ENCODE measurements at regions of chr6 and their contacts with region 1.

Region 1: DNA sequence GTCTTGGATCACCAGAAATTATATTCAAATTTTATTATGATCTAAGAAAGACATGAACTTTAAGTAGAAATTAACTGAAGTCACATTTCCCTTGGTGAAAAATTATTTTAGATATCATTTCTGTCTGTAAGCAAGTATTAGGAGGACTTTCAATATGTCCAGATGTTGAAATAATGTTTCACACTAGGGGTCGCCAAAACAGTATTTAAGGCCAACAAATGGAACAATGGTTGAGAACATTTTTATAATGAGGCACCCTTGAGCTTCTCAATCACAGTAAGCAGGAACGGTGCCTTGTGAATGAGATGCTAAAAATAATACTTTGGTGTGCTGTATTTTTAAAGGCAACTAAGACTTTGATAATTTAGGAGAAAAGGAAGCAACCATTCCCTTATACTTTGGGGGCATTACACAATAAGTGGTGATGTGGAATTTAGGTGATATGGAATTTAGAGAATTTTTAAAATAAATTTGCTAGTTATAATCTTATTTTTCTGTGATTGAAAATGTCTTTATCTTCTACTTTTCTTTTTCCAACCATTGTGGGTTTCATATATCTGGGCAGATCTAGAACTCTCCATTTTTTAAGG is 9.6 kb upstream of the SF3B5 start:
- DNase-seq: peak; percentile 59
- ATAC-seq: peak; percentile 92
- H3K4me3 ChIP-seq: no peak overlapping the region
- H3K27ac ChIP-seq: no peak overlapping the region
- H3K4me1 ChIP-seq: no peaks in the 10 kb centered on the region
- H3K27me3 ChIP-seq: no peaks in the 10 kb centered on the region
- CTCF ChIP-seq: peak; percentile 55 to 88 (median 79)
- POLR2A ChIP-seq: no peak
- RAD21 ChIP-seq: peak; percentile 95

Region 2: DNA sequence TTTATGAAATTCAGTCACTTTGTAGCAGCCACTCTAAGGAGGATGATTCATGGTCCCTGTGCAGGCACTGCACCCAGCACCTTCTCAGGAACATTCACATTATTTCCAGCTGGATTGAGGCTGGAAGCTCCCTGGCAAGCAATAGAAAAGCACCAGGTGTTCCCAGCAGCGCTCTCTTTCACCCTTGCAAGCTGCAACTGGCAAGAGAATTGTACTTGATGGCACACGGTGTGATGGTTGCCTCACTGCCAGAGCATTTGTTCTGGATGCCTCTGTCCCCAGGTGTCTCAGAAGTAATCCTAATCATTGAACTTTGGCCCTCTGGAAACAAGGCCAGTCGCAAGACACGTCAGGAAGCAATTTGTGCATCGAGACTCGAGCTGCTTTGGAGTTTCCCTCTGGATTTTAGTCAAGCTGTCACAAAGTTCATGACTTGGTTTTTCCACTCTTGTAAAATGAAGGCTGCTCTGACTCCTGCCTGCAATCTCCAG is 452.1 kb before region 1 on chr6:
- CTCF ChIA-PET with region 1: no interaction called
- POLR2A ChIA-PET with region 1: no interaction called
- RAD21 ChIA-PET with region 1: no interaction called
- intact Hi-C with region 1: no loop called
- DNase-seq: no peak
- ATAC-seq: no peak
- H3K4me3 ChIP-seq: no peak overlapping the region
- H3K27ac ChIP-seq: no peak overlapping the region
- H3K4me1 ChIP-seq: no peaks in the 10 kb centered on the region
- H3K27me3 ChIP-seq: no peaks in the 10 kb centered on the region
- CTCF ChIP-seq: no peak
- POLR2A ChIP-seq: no peak
- RAD21 ChIP-seq: no peak

Region 3: DNA sequence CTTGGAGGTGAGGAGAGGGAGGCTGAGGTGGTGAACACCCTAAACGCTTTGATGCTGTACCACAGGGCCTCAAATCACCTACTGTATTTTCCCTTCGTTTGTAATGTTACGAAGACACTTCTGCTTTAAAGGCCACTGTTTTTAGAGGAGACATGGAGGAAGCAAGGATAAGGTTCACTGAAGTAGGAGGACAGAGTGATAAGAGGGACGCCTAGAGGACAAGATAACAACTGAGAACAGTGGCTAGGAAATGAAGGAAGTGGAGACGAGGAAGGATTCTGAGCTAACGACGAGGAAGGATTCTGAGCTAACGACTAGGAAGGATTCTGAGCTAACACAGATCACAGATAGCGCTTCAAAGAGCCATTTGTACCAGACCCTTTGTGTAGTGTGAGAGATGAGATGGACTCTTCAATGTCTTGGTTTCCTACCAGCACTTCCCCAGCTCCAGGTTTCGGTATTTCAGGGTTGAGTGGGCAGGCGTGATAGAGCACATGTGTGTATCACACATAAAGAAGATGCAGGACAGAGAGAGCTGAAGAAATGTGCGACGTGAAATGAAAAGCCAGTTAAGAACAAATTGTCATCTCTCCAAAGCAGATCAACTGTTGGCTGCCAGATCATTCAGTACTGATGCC is 17.1 kb before region 1 on chr6:
- CTCF ChIA-PET with region 1: no interaction called
- POLR2A ChIA-PET with region 1: no interaction called
- RAD21 ChIA-PET with region 1: no interaction called
- intact Hi-C with region 1: no loop called
- DNase-seq: no peak
- ATAC-seq: no peak
- H3K4me3 ChIP-seq: no peak overlapping the region
- H3K27ac ChIP-seq: no peak overlapping the region
- H3K4me1 ChIP-seq: no peaks in the 10 kb centered on the region
- H3K27me3 ChIP-seq: no peaks in the 10 kb centered on the region
- CTCF ChIP-seq: no peak
- POLR2A ChIP-seq: no peak
- RAD21 ChIP-seq: no peak

Region 4: GRCh38 chr6:144215932-144216667 is 111.1 kb after region 1 on chr6:
- CTCF ChIA-PET with region 1: interaction called, 7 read pairs
- POLR2A ChIA-PET with region 1: no interaction called
- RAD21 ChIA-PET with region 1: no interaction called
- intact Hi-C with region 1: loop called (anchors 2 kb)
- DNase-seq: peak; percentile 91
- ATAC-seq: peak; percentile 87
- H3K4me3 ChIP-seq: peak overlapping the region; percentile 45 to 58
- H3K27ac ChIP-seq: peak overlapping the region; percentile 61
- H3K4me1 ChIP-seq: peaks cover 7 to 22% of the 10 kb centered on the region in 2 experiments; a peak in 3 of 4 replicates
- H3K27me3 ChIP-seq: no peaks in the 10 kb centered on the region
- CTCF ChIP-seq: peak; percentile 59 to 64 (median 63); a peak in 5 of 6 replicates
- POLR2A ChIP-seq: no peak
- RAD21 ChIP-seq: peak; percentile 69

Region 5: GRCh38 chr6:144482142-144482541 is 377.1 kb after region 1 on chr6:
- CTCF ChIA-PET with region 1: interaction called, 21 read pairs
- POLR2A ChIA-PET with region 1: no interaction called
- RAD21 ChIA-PET with region 1: interaction called in 1 of 2 experiments, 5 read pairs
- intact Hi-C with region 1: loop called (anchors 1 kb)
- DNase-seq: peak; percentile 60
- ATAC-seq: peak; percentile 87
- H3K4me3 ChIP-seq: no peak overlapping the region
- H3K27ac ChIP-seq: no peak overlapping the region
- H3K4me1 ChIP-seq: no peaks in the 10 kb centered on the region
- H3K27me3 ChIP-seq: no peaks in the 10 kb centered on the region
- CTCF ChIP-seq: peak; percentile 62 to 75 (median 70)
- POLR2A ChIP-seq: no peak
- RAD21 ChIP-seq: peak; percentile 86

Region 6: DNA sequence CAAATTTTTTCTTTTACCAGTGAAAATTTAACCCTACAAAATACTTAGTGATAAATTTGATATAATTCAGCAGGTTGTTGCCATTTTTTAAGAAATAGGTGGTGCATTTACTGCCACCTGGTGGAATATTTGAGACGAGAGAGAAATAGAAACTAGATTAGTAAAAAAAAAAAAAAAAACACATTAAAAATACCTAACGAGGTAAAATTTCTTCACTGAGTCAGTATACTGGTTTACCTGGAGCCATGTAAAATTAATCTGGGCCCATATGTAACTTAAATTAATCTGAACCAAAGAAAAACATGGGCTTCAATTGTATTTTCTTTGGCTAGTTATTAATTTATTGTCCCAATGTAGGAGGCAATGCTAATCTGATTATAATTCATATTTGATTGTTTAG is 1109.6 kb after region 1 on chr6:
- CTCF ChIA-PET with region 1: no interaction called
- POLR2A ChIA-PET with region 1: no interaction called
- RAD21 ChIA-PET with region 1: no interaction called
- intact Hi-C with region 1: loop called (anchors 10 kb)
- DNase-seq: peak; percentile 36
- ATAC-seq: no peak
- H3K4me3 ChIP-seq: no peak overlapping the region
- H3K27ac ChIP-seq: no peak overlapping the region
- H3K4me1 ChIP-seq: peaks cover 0 to 5% of the 10 kb centered on the region in 2 experiments; a peak in 2 of 4 replicates
- H3K27me3 ChIP-seq: no peaks in the 10 kb centered on the region
- CTCF ChIP-seq: peak; percentile 33 to 68 (median 63); a peak in 5 of 6 replicates
- POLR2A ChIP-seq: no peak
- RAD21 ChIP-seq: peak; percentile 77

Region 7: DNA sequence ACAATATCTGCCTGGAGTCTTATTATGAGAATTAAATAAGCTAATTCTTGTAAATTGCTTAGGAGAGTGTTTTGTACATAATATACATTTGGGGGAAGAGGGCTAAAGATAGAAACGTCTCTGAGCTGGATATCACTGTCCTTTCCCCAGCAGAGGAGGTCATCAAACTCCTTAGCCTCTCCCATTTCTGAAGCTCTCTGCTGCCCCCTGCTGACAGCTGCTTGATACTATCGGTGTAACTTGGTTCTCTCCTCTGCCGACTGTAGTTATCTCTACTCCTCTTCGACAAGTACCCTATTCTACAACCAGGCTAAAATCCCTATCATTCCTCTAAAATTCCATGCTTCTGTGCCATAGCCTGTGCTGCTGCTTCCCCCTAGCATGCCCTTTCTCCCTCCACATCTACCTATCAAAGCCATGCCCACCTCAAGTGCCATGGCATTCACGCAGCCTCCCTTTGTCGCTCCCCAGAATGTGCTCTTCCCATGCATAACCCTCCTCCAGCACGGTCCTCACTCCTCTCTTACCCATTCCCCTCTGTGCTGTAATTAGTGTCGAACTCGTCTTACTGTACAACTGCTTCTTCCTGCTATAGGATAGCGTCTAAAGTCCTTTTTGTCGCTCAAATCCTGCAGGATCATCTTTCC is 1529.1 kb after region 1 on chr6:
- CTCF ChIA-PET with region 1: no interaction called
- POLR2A ChIA-PET with region 1: no interaction called
- RAD21 ChIA-PET with region 1: no interaction called
- intact Hi-C with region 1: loop called (anchors 5 kb)
- DNase-seq: peak; percentile 75
- ATAC-seq: peak; percentile 98
- H3K4me3 ChIP-seq: no peak overlapping the region
- H3K27ac ChIP-seq: no peak overlapping the region
- H3K4me1 ChIP-seq: no peaks in the 10 kb centered on the region
- H3K27me3 ChIP-seq: no peaks in the 10 kb centered on the region
- CTCF ChIP-seq: peak; percentile 46 to 80 (median 78); a peak in 5 of 6 replicates
- POLR2A ChIP-seq: no peak
- RAD21 ChIP-seq: peak; percentile 90

Measured in HCT116 (cell line).